K562 (cell line): ENCODE measurements at regions of chr12 and their contacts with region 1.

Region 1: DNA sequence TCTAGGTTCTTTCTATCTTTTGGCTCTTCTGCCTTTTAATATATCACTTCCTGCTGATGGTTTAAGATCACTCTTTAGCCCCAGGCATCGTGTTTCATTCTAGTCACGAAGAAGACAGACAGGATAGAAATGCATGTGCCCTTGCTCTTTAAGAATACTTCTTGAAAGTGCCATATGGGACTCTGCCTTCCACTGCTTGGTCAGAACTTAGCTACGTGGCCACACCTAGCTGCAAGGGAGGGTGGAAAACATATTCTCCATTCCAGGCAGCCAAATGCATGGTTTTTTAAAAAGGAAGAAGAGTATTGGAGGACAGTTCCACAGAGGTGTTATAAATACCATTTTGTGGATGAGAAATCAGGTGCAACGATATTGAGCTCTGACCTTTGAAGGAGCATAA is 143.3 kb downstream of the KLRB1 start:
- DNase-seq: no peak
- ATAC-seq: no peak
- H3K4me3 ChIP-seq: no peak overlapping the region
- H3K27ac ChIP-seq: no peak overlapping the region
- H3K4me1 ChIP-seq: no peaks in the 10 kb centered on the region; a peak in 1 of 5 replicates
- H3K27me3 ChIP-seq: no peaks in the 10 kb centered on the region
- CTCF ChIP-seq: no peak
- EP300 ChIP-seq: no peak
- POLR2A ChIP-seq: no peak
- RAD21 ChIP-seq: no peak

Region 2: GRCh38 chr12:9707864-9708808 is 243.7 kb after region 1 on chr12:
- CTCF ChIA-PET with region 1: no interaction called
- POLR2A ChIA-PET with region 1: no interaction called
- in situ Hi-C with region 1: loop called (anchors 25 kb)
- intact Hi-C with region 1: no loop called
- DNase-seq: peak; percentile 34 to 67 (median 42)
- ATAC-seq: peak; percentile 88
- H3K4me3 ChIP-seq: no peak overlapping the region
- H3K27ac ChIP-seq: no peak overlapping the region
- H3K4me1 ChIP-seq: no peaks in the 10 kb centered on the region; a peak in 1 of 5 replicates
- H3K27me3 ChIP-seq: no peaks in the 10 kb centered on the region
- CTCF ChIP-seq: peak; percentile 56 to 70 (median 69)
- EP300 ChIP-seq: no peak
- POLR2A ChIP-seq: no peak
- RAD21 ChIP-seq: peak; percentile 51 to 75